Cardiac septum (tissue), 1 donor: ENCODE measurements at regions of chr15 and their contacts with region 1.

Region 1: DNA sequence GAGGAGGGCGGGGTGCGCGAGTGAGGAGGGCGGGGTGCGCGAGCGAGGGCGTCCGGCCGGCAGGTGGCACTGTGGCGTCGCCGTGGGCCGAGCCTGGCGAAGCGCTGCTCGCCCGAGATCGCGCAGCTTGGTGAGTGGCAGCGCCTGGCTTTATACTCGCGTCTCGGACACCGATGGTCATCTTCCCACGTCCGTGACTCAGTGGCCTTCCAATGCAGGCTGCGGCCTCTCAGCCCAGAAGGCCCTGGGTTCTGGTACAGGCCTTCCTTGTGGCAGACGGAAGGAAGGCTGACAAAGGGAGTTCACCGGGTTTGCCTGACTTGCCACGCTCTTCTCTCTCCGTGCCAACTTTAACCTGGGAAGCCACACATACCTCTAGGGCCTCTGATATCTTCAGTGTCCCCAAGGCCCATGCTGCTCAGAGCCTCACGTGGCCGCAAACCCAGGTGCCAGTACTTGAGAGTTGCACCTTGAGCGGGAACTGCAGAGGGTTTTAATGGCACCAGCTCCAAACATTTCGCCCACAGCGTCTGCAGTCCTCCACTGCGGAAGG is 195.3 kb upstream of the LYSMD4 start:
- DNase-seq: peak; percentile 92

Region 2: GRCh38 chr15:99385865-99386264 is 542.6 kb before region 1 on chr15:
- intact Hi-C with region 1: no loop called
- DNase-seq: peak; percentile 87

Region 3: GRCh38 chr15:99845009-99845408 is 83.5 kb before region 1 on chr15:
- intact Hi-C with region 1: no loop called
- DNase-seq: no peak

Region 4: DNA sequence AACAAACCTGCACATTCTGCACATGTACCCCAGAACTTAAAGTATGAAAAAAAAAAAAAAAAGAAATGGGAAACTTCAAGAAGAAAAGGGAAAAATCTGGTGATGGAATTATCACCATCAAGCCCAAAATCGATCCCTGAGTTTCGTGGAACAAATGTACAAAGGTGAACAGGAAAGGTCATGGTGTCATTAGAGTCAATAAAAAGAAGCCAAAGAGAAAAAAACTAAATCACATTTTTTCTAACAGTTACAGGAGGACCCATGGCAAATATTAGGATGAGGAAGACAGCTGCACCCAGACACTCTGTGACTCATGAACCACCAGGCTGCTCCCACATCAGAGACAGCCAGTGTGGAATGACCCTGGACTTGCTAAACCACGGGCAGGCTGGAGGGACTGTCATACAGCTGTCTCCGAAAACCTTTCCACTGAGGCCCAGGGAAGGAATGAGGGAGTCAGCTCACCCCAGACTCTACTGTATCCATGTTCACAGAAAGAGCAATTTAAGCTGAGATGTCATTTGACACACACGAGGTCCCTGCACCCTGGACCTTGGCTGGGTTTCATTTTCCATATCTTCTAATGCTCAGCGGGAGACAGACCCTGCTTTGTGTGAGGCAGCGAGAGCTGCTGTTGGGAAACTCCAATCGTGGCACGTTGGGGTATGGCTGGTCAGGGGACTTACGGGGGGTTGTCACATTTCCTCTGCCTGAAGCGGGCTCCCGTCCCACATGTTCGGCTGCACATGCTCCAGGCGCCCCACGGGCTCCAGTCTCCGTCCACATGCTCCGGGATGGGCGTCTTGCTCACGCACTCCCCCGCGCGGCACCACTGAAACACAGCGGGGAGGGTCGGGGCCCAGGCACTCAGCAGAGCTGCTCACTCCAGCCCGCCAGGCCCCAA is 203.1 kb after region 1 on chr15:
- intact Hi-C with region 1: loop called (anchors 5 kb)
- DNase-seq: no peak

Region 5: DNA sequence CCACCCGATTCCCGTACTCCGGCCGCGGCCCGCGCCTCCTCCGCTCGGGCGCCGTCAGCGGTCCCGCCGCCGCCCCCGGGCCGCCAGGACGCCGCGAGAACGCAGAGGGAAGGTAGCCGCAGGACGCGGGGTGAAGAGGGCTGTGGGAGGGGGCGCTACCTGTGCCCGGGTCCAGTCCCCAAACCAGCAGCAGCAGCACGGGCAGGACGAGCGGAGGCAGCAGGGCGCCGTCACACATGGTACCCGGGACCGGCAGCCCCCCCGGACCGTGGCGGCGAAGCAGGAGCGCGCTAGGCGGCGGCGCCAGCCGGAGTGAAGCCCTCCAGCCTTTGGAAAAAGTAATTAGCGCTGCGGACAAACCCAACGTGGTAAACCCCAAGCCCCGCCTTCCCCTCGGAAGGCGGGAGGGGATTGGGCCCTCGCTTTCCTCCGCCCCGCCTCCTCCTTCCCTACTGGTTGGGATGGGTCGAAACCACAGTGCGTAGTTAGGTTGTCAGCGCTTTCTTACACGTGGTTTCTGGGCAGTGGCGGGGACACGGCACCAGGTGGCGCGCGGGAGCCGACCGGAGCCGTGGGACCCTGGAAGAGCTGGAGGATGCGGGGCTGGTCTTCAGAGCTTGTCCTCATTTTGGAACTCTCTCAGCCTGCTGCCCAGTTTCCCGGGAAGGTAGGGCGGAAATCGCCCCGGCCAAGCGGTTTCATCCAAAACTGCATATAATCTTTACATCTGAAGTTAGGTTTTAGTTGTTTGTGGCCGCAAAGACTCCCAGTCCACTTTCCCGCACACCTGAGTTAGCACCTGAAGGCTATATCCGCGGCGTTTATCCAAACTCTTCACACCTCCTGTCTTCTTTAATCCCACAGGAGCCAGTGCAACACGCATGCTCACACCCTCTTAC is 413.4 kb after region 1 on chr15 and contains the start of gene ADAMTS17:
- intact Hi-C with region 1: loop called (anchors 2 kb)
- DNase-seq: peak; percentile 97
- total RNA-seq, gene ADAMTS17: 0.67 TPM